Naive thymus-derived CD4-positive, alpha-beta T cell (primary cell): ENCODE measurements at regions of chr19 and their contacts with region 1.

Region 1: DNA sequence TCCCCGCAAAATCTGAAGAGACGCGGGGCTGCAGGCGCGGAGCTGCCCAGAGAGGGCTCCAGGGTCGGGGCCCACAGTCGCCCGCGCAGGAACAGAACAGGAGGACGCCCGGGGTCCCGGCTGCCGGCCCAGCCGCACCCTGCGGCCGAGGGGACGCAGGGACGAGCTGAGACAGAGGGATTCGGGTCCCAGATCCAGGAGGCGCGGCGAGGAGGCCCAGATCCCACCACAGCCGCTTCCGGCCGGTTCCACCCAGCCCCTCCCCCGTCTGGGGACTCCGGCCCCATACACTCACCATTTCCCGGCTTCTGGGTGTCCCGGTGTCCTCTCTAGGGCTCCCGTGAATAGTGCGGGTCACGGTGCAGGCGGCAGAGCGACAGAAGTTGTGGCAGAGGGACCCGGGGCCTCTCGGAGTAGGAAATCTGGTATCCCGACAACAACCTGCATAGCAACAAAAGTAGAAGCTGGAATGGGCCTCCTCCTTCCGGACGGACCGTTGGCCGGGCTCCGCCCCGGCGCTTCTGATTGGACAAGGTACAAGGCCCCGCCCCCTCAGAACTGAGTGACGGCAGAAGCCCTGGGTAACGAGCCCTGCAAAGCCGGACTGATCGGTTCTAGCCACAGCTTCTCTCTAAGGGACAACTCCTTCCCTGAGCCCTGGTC is at the start of gene ZNF20:
- DNase-seq: peak; percentile 68 to 90 (median 72)
- ATAC-seq: peak; percentile 95
- H3K4me3 ChIP-seq: peak within 1 kb of the TSS; percentile 74
- H3K4me3 Mint-ChIP-seq: peak within 1 kb of the TSS; percentile 82 to 96 (median 89)
- H3K27ac ChIP-seq: peak within 1 kb of the TSS; percentile 77
- H3K27ac Mint-ChIP-seq: peak within 1 kb of the TSS; percentile 40 to 96 (median 79)
- H3K4me1 ChIP-seq: peaks cover 18 to 24% of the 10 kb centered on the region in 2 donors
- H3K4me1 Mint-ChIP-seq: peaks cover 25 to 44% (median 35%) of the 10 kb centered on the region in 7 donors
- H3K27me3 ChIP-seq: no peaks in the 10 kb centered on the region
- H3K27me3 Mint-ChIP-seq: no peaks in the 10 kb centered on the region
- total RNA-seq, gene ZNF20: 1.2 to 6.7 (median 4.8) TPM

Region 2: DNA sequence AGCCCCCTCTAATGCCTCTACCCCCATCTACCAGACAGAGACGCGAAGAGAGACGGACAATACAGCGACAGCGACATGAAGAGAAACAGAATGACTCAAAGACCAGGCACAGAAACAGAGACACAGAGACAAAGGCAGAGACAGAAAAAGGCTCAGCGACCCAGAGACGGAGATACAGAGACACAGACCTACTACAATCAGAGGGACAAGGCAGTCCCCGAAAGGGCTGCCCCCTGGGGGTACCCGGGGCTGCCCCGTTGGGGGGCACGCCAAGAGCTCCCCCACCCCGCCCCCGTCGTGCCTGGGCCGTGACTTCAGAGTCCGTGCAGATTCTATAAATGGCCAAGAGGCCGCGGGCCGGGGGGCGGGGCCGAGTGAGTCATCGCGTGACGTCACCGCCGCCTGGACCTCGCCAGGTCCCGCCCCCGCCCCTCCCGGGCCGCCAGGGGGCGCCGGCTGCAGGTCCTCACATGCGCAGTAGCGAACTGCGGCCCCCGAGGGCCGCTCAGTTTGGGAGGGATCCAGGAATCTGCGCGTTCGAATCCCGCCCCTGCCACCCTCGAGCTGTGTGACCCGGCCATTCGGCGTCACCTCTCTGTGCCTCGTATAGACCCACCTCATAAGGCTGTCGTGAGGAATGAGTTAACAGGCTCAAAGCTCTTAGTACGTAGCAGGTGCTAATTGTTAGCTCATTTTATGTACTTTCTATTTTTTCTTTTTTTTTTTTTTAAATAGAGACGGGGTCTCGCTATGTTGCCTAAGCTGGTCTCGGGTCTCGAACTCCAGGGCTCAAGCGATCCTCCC is 604.0 kb before region 1 on chr19:
- CTCF ChIA-PET with region 1: no interaction called
- POLR2A ChIA-PET with region 1: no interaction called
- intact Hi-C with region 1: loop called in 1 of 2 experiments (anchors 2 kb)
- DNase-seq: peak; percentile 59 to 95 (median 68)
- ATAC-seq: peak; percentile 95
- H3K4me3 ChIP-seq: peak overlapping the region; percentile 52
- H3K4me3 Mint-ChIP-seq: peak overlapping the region; percentile 59 to 88 (median 74)
- H3K27ac ChIP-seq: peak overlapping the region; percentile 43
- H3K27ac Mint-ChIP-seq: peak overlapping the region in 8 of 9 donors; percentile 2 to 88 (median 60)
- H3K4me1 ChIP-seq: peaks cover 5% of the 10 kb centered on the region in 2 donors
- H3K4me1 Mint-ChIP-seq: peaks cover 12 to 22% (median 16%) of the 10 kb centered on the region in 7 donors
- H3K27me3 ChIP-seq: peaks cover 0 to 3% of the 10 kb centered on the region in 2 donors
- H3K27me3 Mint-ChIP-seq: peaks cover 11 to 36% (median 16%) of the 10 kb centered on the region in 5 donors

Region 3: GRCh38 chr19:11814029-11814699 is 325.9 kb before region 1 on chr19 and contains the start of gene ZNF440:
- CTCF ChIA-PET with region 1: no interaction called
- POLR2A ChIA-PET with region 1: interaction called, 5 read pairs
- intact Hi-C with region 1: loop called in 1 of 2 experiments (anchors 5 kb)
- DNase-seq: peak; percentile 65 to 88 (median 73)
- ATAC-seq: peak; percentile 99
- H3K4me3 ChIP-seq: peak within 1 kb of the TSS; percentile 94
- H3K4me3 Mint-ChIP-seq: peak within 1 kb of the TSS; percentile 85 to 96 (median 92)
- H3K27ac ChIP-seq: peak within 1 kb of the TSS; percentile 66
- H3K27ac Mint-ChIP-seq: peak within 1 kb of the TSS; percentile 72 to 90 (median 81)
- H3K4me1 ChIP-seq: peaks cover 0 to 4% of the 10 kb centered on the region in 2 donors
- H3K4me1 Mint-ChIP-seq: peaks cover 10 to 39% (median 19%) of the 10 kb centered on the region in 7 donors
- H3K27me3 ChIP-seq: no peaks in the 10 kb centered on the region
- H3K27me3 Mint-ChIP-seq: no peaks in the 10 kb centered on the region
- total RNA-seq, gene ZNF440: 10.4 to 19.5 (median 16.0) TPM

Region 4: DNA sequence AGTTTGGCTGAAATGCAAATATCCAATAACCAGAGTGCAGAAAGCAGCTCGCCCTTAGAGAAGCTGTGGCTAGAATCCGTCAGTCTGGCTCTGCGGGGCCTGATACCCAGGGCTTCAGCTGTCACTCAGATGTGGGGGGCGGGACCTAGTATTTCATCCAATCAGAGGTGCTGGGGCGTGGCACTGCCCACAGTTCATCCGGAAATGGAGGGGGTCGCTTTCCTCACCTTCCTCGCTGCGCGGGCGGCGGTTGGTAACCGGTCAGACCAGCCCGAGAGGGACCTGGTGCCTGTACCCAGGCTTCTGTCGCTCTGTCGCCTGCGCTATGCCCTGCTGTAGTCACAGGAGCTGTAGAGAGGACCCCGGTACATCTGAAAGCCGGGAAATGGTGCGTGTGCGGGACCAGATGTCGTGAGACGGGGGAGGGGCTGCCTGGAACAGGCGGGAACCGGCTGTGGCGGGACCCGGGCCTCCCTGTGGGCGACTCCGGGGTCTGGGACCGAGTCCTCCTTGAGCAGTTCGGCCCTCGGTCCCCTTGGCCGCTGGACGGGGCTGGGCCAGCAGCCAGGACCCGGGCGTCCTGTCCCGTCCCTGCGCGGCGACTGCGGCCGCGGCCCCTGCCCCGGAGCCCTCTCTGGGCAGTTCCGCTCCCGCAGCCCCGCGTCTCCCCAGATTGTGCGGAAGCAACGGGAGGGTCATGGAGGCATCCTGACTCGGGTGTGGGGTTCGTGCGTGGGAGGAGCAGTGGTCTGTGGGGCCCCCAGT is 214.9 kb before region 1 on chr19 and contains the start of gene ZNF700:
- CTCF ChIA-PET with region 1: interaction called, 28 read pairs
- POLR2A ChIA-PET with region 1: interaction called, 6 read pairs
- intact Hi-C with region 1: loop called (anchors 1 kb)
- DNase-seq: peak; percentile 67 to 93 (median 90)
- ATAC-seq: peak; percentile 94
- H3K4me3 ChIP-seq: peak within 1 kb of the TSS; percentile 98
- H3K4me3 Mint-ChIP-seq: peak within 1 kb of the TSS; percentile 91 to 99 (median 98)
- H3K27ac ChIP-seq: peak within 1 kb of the TSS; percentile 75
- H3K27ac Mint-ChIP-seq: peak within 1 kb of the TSS; percentile 93 to 99 (median 98)
- H3K4me1 ChIP-seq: peaks cover 6 to 10% of the 10 kb centered on the region in 2 donors
- H3K4me1 Mint-ChIP-seq: peaks cover 26 to 56% (median 39%) of the 10 kb centered on the region in 7 donors
- H3K27me3 ChIP-seq: no peaks in the 10 kb centered on the region
- H3K27me3 Mint-ChIP-seq: no peaks in the 10 kb centered on the region
- total RNA-seq, gene ZNF700: 18.0 to 26.4 (median 22.8) TPM

Region 5: GRCh38 chr19:12064590-12065538 is 75.2 kb before region 1 on chr19 and contains the start of gene ZNF844:
- CTCF ChIA-PET with region 1: interaction called, 17 read pairs
- POLR2A ChIA-PET with region 1: no interaction called
- intact Hi-C with region 1: no loop called
- DNase-seq: peak; percentile 35 to 77 (median 67)
- ATAC-seq: peak; percentile 97
- H3K4me3 ChIP-seq: peak within 1 kb of the TSS; percentile 81
- H3K4me3 Mint-ChIP-seq: peak within 1 kb of the TSS; percentile 74 to 93 (median 90)
- H3K27ac ChIP-seq: peak within 1 kb of the TSS; percentile 70
- H3K27ac Mint-ChIP-seq: peak within 1 kb of the TSS; percentile 63 to 93 (median 84)
- H3K4me1 ChIP-seq: peaks cover 0 to 7% of the 10 kb centered on the region in 2 donors
- H3K4me1 Mint-ChIP-seq: peaks cover 0 to 19% (median 12%) of the 10 kb centered on the region in 7 donors
- H3K27me3 ChIP-seq: no peaks in the 10 kb centered on the region
- H3K27me3 Mint-ChIP-seq: no peaks in the 10 kb centered on the region
- total RNA-seq, gene ZNF844: 1.0 to 20.9 (median 15.8) TPM

Region 6: GRCh38 chr19:12156223-12157058 is 16.4 kb after region 1 on chr19 and contains the start of gene ZNF625:
- CTCF ChIA-PET with region 1: interaction called, 8 read pairs
- POLR2A ChIA-PET with region 1: interaction called, 4 read pairs
- intact Hi-C with region 1: loop called in 1 of 2 experiments (anchors 1 kb)
- DNase-seq: peak in 4 of 9 donors; percentile 11 to 45 (median 15)
- ATAC-seq: peak; percentile 71
- H3K4me3 ChIP-seq: peak within 1 kb of the TSS; percentile 53
- H3K4me3 Mint-ChIP-seq: peak within 1 kb of the TSS; percentile 74 to 88 (median 84)
- H3K27ac ChIP-seq: peak within 1 kb of the TSS; percentile 72
- H3K27ac Mint-ChIP-seq: peak within 1 kb of the TSS; percentile 52 to 81 (median 72)
- H3K4me1 ChIP-seq: peaks cover 0 to 8% of the 10 kb centered on the region in 2 donors
- H3K4me1 Mint-ChIP-seq: peaks cover 4 to 25% (median 13%) of the 10 kb centered on the region in 7 donors
- H3K27me3 ChIP-seq: no peaks in the 10 kb centered on the region
- H3K27me3 Mint-ChIP-seq: peaks cover 0 to 3% (median 0%) of the 10 kb centered on the region in 5 donors
- total RNA-seq, gene ZNF625: 1.1 to 5.2 (median 4.2) TPM

Region 7: GRCh38 chr19:12346896-12347295 is 206.9 kb after region 1 on chr19:
- CTCF ChIA-PET with region 1: no interaction called
- POLR2A ChIA-PET with region 1: no interaction called
- intact Hi-C with region 1: loop called in 1 of 2 experiments (anchors 2 kb)
- DNase-seq: peak in 5 of 9 donors; percentile 19 to 52 (median 32)
- ATAC-seq: peak; percentile 68
- H3K4me3 ChIP-seq: no peak overlapping the region
- H3K4me3 Mint-ChIP-seq: no peak overlapping the region
- H3K27ac ChIP-seq: no peak overlapping the region
- H3K27ac Mint-ChIP-seq: peak overlapping the region in 1 of 9 donors; percentile 36
- H3K4me1 ChIP-seq: no peaks in the 10 kb centered on the region
- H3K4me1 Mint-ChIP-seq: peaks cover 0 to 2% (median 0%) of the 10 kb centered on the region in 7 donors
- H3K27me3 ChIP-seq: no peaks in the 10 kb centered on the region
- H3K27me3 Mint-ChIP-seq: no peaks in the 10 kb centered on the region